ENCODE measurements at regions of chr14 and their contacts with region 1.

Region 1: DNA sequence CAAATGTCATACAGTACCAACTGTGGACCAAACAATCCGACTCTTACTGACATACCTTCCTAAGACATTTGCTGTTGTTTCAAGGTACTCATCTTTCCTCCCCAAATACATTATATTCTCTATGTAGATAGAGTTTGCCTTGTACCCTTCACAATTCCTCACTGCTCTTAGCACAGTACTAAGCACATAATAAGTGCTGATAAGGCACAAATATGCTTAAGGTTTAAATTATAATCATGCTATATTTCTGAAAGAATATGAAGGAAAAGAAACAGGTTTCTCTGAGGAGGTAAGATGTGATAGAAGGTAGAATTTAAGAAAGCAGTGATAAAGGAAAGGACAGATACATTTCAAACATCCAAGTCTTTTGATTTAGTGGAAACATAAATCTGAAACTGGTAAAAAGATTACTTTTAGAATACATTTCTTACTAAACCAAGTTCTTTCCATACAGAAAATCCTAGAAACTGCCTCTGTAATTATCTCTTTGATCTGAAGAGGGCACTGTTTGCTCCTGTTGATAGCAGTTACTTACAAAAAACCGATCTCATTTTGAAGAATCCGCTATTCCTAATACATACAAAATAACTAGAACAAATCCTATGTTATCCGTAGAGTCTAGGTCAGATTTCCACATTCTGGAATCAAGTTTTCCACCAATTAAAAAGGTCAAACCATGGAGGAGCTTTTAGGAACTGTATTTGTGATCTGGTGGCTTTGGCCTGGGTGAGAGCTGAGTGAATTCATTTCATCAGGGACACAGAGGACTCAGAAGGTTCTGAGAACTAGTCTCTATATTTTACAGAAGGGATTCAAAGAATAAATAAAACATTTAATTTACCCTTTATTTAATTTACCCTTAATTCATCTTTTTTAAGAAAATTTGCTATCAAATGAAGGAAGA is 311.9 kb downstream of the DAD1 start:
- DNase-seq: no peak
- H3K4me3 ChIP-seq: no peak overlapping the region
- CTCF ChIP-seq: peak; percentile 41

Region 2: DNA sequence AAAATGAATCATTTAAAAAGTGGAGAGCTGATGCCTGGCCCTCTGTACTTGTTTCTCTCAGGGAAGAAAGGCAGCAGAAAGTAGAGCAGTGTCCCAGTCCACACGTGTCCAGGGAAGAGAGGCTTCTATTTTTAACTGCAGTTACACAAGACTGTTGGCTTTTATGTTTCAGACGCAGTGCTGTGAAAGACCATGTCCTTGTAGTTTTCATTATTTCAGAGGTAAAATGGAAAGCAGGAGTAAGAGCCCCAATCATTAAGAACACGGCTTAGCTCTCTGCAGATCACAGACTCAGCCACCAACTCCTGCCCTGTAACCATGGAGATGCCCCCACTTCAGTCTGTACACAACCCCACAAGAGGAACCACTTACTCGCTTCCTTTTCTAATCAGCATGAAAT is 24.5 kb before region 1 on chr14:
- CTCF ChIA-PET with region 1: interaction called, 16 read pairs
- POLR2A ChIA-PET with region 1: no interaction called
- DNase-seq: no peak
- H3K4me3 ChIP-seq: no peak overlapping the region
- CTCF ChIP-seq: no peak

Region 3: GRCh38 chr14:22265319-22266137 is 11.6 kb before region 1 on chr14:
- CTCF ChIA-PET with region 1: interaction called, 142 read pairs
- POLR2A ChIA-PET with region 1: no interaction called
- DNase-seq: no peak
- H3K4me3 ChIP-seq: no peak overlapping the region
- CTCF ChIP-seq: no peak

Region 4: DNA sequence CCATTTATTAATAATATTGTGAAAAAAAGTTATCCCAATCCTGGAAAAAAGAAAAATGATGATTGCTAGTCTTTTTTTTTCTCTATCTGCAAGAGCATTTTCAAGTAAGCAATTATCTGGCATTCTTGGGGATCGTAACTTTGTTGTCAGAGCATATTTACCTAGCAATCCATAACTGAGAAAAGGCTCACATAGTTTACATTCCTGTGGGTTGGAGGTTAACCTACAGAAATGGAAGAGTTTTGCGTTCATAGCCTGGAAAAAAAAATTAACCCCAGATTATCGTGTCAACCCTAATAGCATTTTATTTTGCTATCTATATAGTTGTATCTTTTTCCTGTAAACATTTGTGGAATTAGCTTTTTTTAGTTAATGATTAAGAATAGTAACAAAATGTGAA is 19.6 kb after region 1 on chr14:
- CTCF ChIA-PET with region 1: interaction called, 13 read pairs
- POLR2A ChIA-PET with region 1: no interaction called
- DNase-seq: no peak
- H3K4me3 ChIP-seq: no peak overlapping the region
- CTCF ChIP-seq: no peak

Region 5: DNA sequence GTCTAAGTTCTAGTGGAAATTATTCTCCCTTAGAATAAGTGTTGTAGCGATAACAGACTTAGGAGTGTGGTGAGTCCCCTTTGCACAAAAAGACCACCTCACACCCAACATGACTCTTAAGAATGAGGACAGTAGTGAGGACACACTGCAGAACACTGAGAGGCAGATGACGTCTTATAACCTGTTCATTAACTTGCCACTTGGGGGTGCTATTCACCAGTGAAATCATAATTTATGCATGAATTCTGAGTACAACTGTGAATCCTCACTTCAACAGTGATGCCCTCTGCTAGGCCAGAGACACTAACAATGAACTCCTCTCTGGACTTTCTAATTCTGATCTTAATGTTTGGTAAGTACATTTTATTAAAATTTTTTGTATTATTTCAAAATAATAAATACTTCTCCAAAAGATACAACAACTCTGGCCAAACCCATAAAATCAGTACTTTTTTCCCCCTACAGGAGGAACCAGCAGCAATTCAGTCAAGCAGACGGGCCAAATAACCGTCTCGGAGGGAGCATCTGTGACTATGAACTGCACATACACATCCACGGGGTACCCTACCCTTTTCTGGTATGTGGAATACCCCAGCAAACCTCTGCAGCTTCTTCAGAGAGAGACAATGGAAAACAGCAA is 37.1 kb after region 1 on chr14:
- CTCF ChIA-PET with region 1: interaction called, 10 read pairs
- POLR2A ChIA-PET with region 1: no interaction called
- DNase-seq: no peak
- H3K4me3 ChIP-seq: no peak overlapping the region
- CTCF ChIP-seq: peak; percentile 63

Region 6: GRCh38 chr14:22375321-22375930 is 98.3 kb after region 1 on chr14:
- CTCF ChIA-PET with region 1: interaction called, 12 read pairs
- POLR2A ChIA-PET with region 1: no interaction called
- DNase-seq: no peak
- H3K4me3 ChIP-seq: no peak overlapping the region
- CTCF ChIP-seq: peak; percentile 39

Measured in AG04449 (cell line).